Activated CD4-positive, alpha-beta memory T cell treated with anti-CD3 and anti-CD28 coated beads for 36 hours (primary cell): ENCODE measurements at regions of chr1 and their contacts with region 1.

Region 1: DNA sequence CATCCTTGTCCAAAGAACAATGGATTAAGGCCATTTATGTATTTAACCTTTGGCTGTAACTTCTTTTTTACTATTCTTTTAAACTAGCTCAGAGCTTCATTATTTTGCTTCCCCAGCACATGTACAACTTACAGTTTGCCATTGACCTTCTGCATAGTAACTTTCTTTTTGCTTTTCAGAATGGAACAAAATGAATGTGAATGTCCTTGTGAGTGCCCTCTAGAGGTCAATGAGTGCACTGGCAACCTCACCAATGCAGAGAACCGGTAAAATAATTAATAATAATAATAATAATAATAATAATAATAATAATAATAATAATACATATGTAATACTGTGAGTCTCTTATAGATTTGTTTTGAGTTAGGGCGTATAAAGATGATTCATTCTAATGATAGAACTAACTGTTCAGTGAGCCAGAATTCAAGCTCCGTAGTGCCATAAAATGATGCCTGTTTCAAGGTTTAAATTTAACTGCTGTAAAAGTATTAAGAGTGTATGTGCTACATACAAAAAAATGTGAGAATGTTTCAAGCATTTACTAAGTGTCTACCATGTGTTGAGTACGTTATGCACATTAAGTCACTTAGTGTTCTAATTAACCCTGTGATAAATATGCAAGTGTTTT is 69.0 kb upstream of the RAVER2 start:
- DNase-seq: no peak
- H3K4me3 Mint-ChIP-seq: no peak overlapping the region
- H3K27ac Mint-ChIP-seq: no peak overlapping the region
- H3K4me1 Mint-ChIP-seq: no peaks in the 10 kb centered on the region
- H3K27me3 Mint-ChIP-seq: peaks cover 4% of the 10 kb centered on the region

Region 2: DNA sequence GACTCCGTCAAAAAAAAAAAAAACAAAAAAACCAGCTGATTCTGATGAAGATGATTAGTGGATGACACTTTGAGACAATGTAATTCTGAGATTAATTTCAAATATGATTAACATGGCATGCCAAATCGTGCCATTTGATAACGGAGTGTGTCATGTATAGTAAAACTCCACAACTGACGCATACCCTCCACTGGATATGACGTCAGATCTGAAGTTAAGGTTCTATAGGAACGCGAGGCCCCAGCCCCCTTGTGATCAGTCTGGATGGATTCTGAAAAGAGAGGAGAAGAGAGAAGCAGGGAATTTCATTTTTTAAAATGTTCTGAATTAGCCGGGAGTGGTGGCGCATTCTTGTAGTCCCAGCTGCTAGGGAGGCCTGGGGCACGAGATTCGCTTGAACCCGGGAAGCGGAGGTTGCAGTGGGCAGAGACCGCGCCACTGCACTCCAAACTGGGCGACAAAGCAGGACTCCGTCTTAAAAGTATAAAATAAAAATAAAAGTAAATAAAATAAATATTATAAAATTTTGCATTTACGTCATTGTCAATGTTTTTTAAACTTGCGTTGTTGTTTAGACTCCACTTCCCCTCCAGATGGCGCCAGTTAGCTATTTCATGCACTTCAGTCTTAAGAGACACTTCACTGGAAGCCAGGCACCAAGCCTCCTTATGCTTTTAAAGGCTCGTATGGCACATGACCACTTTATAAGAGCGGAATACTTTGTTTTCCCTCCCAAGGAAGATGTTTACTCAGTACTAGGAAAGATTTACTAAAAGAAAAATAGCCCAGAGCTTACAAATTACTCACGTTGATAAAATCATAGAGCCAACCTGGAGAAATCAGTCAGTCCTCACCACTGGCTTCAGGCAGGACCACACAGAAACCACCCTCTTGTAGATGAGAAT is 406.9 kb before region 1 on chr1:
- CTCF ChIA-PET with region 1: interaction called, 31 read pairs
- POLR2A ChIA-PET with region 1: no interaction called
- intact Hi-C with region 1: loop called (anchors 5 kb)
- DNase-seq: peak; percentile 62
- H3K4me3 Mint-ChIP-seq: no peak overlapping the region
- H3K27ac Mint-ChIP-seq: no peak overlapping the region
- H3K4me1 Mint-ChIP-seq: peaks cover 2% of the 10 kb centered on the region
- H3K27me3 Mint-ChIP-seq: peaks cover 18% of the 10 kb centered on the region

Region 3: DNA sequence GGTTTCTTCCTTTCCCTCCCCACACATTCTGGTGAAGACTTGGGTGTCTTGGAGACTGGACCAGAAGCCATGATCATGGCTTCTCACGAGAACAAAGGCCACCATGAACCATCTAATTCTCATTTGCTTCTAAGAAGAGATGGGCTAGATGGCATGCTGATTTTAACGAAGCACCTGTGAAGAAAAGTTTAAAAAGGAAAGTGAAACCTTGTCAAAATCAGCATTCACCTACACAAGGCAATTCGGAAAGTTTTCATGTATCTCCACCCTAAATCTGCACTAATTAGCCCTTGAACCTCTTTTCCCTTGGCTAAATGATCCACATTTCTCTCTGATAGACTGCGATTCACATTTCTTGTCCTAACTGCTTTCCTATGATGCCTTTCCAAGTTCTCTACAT is 45.2 kb before region 1 on chr1:
- CTCF ChIA-PET with region 1: no interaction called
- POLR2A ChIA-PET with region 1: no interaction called
- intact Hi-C with region 1: no loop called
- DNase-seq: no peak
- H3K4me3 Mint-ChIP-seq: no peak overlapping the region
- H3K27ac Mint-ChIP-seq: no peak overlapping the region
- H3K4me1 Mint-ChIP-seq: peaks cover 12% of the 10 kb centered on the region
- H3K27me3 Mint-ChIP-seq: peaks cover 3% of the 10 kb centered on the region

Region 4: DNA sequence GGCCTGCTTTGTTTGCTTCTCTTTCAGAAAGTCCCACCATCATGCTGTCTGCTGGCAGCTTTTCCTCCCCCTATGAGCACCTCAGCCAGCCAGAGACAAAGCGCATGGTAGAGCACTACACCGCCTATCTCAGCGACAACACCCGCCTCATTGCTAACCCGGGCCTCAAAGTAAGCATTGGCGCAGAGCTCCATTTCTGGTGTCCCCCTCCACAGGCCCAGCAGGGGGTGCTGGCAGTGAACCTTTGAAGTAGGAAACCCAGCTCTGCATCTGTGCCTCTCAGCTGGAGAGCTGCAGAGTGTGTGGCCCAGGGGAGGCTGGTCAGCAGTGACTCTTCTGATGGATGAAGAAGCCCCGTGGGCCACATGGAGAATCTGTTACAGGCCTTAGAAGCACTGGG is 12.2 kb before region 1 on chr1:
- CTCF ChIA-PET with region 1: interaction called, 23 read pairs
- POLR2A ChIA-PET with region 1: no interaction called
- intact Hi-C with region 1: no loop called
- DNase-seq: peak; percentile 35
- H3K4me3 Mint-ChIP-seq: no peak overlapping the region
- H3K27ac Mint-ChIP-seq: no peak overlapping the region
- H3K4me1 Mint-ChIP-seq: no peaks in the 10 kb centered on the region
- H3K27me3 Mint-ChIP-seq: peaks cover 1% of the 10 kb centered on the region

Region 5: GRCh38 chr1:64686828-64687724 is 11.2 kb after region 1 on chr1:
- CTCF ChIA-PET with region 1: interaction called, 12 read pairs
- POLR2A ChIA-PET with region 1: no interaction called
- intact Hi-C with region 1: no loop called
- DNase-seq: peak; percentile 35
- H3K4me3 Mint-ChIP-seq: no peak overlapping the region
- H3K27ac Mint-ChIP-seq: no peak overlapping the region
- H3K4me1 Mint-ChIP-seq: peaks cover 6% of the 10 kb centered on the region
- H3K27me3 Mint-ChIP-seq: no peaks in the 10 kb centered on the region

Region 6: DNA sequence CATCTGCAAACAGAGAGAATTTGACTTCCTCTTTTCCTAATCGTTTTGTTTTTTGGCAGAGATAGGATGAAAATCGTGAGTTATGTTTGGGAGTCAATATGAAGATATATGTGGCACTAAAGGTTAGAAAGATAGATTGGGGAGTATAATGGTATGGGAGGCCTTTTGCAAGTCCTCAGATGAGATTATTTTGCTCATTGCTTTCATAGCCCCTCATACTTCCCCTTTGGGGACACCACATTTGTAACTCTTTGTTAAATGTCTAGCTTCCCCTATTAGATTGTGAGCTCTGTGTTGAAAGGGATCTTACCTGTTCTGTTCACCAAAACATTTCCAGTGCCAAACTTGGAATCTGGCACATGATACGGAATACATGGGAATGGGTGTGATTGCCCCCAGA is 99.3 kb after region 1 on chr1:
- CTCF ChIA-PET with region 1: no interaction called
- POLR2A ChIA-PET with region 1: no interaction called
- intact Hi-C with region 1: no loop called
- DNase-seq: no peak
- H3K4me3 Mint-ChIP-seq: no peak overlapping the region
- H3K27ac Mint-ChIP-seq: no peak overlapping the region
- H3K4me1 Mint-ChIP-seq: peaks cover 3% of the 10 kb centered on the region
- H3K27me3 Mint-ChIP-seq: no peaks in the 10 kb centered on the region

Region 7: DNA sequence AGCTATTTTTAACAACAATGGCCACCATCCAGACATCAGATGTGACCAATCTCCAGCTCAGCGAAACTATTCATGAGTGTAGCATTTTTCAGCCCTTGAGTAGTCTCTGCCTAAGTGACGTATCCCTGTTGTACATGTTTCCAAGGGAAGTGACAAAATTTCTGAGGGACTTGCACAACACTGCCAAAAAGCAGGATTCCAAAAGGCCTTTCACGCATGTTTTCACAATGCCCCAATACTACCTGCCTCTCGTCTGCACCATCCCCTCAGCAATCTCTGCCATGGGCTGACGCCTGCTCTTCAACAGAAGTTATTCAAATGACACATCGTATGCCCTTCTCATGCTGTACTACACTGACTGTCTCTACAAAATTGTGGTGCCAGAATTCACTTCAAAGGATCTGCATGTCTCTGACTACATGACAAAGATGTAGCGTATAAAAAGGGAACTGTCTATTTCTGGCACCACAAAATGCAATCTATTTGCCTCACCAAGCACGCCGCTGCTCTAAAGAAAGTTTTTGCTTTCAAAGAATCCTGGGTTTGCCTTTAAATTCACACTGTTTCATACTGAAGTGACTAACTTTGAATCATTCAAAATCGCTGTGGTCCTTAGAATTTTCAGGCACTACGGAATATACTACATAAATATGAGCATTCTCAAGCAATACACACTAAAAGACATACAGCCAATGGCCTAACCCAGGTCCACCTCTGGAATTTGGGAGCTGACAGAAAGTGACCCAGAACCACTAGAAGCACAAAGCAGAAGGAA is 257.7 kb after region 1 on chr1:
- CTCF ChIA-PET with region 1: no interaction called
- POLR2A ChIA-PET with region 1: no interaction called
- intact Hi-C with region 1: no loop called
- DNase-seq: peak; percentile 27
- H3K4me3 Mint-ChIP-seq: no peak overlapping the region
- H3K27ac Mint-ChIP-seq: no peak overlapping the region
- H3K4me1 Mint-ChIP-seq: peaks cover 79% of the 10 kb centered on the region
- H3K27me3 Mint-ChIP-seq: no peaks in the 10 kb centered on the region

Region 8: DNA sequence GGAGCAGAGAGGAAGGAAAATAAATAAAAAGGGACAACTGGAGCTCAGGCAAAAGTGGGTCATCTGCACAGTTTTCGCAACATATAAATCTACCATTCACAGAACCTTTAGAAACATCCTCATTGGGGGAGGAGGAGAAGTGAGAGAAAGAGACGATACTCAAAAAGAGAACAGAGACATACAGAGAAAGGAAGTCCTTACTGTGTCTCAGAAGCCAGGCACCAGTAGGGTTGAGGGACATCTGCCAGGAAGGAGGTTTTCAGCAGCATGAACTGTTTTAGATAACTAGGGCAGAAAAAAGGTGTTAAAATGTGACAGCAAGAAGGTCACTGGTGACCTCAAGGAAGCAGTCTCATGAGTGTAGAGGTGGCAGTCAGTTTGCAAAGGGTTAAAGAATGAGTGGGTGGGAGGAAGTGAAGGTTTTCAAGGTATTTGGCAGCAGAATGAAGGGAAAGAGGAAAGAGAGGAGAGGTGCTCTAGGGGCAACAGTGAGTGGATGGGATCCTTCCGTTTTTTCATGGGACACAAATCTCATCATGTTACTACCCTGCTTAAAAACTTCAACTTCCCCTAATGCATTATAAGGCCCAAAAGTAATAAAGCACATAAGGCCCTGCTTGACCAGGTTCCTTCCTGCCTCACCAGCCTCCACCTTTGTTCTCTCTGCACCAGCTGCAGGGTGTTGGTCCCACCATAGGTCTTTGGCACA is 281.1 kb after region 1 on chr1:
- CTCF ChIA-PET with region 1: no interaction called
- POLR2A ChIA-PET with region 1: no interaction called
- intact Hi-C with region 1: no loop called
- DNase-seq: peak; percentile 76
- H3K4me3 Mint-ChIP-seq: no peak overlapping the region
- H3K27ac Mint-ChIP-seq: no peak overlapping the region
- H3K4me1 Mint-ChIP-seq: peaks cover 59% of the 10 kb centered on the region
- H3K27me3 Mint-ChIP-seq: no peaks in the 10 kb centered on the region